ENCODE measurements at regions of chr1 and their contacts with region 1.

Region 1: DNA sequence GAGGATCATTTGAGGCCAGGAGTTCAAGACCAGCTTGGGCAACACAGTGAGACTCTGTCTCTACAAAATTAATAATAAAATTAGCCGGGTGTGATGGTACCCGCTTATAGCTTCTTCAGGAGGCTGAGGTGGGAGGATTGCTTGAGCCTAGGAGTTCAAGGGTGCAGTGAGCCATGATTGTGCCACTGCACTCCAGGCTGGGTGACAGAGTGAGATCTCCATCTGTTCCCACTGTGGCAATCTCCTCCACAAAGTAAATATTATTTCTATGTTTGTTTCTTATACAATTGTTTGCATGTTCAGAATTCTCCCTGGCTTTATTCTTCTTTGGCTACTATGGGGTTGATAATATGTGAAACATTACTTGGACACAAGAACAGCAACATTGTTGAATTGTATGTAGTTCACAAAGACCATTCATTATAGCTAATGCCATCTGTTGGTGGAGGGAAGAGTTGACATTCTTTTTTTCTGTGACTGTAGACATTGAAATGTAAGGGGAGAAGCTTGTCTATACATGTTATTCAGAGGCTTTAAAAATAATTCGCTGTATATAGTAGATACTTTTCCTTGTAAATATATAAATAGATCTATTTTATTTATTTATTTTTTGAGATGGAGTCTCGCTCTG is 47.8 kb upstream of the SRSF10 start:
- DNase-seq: no peak

Region 2: DNA sequence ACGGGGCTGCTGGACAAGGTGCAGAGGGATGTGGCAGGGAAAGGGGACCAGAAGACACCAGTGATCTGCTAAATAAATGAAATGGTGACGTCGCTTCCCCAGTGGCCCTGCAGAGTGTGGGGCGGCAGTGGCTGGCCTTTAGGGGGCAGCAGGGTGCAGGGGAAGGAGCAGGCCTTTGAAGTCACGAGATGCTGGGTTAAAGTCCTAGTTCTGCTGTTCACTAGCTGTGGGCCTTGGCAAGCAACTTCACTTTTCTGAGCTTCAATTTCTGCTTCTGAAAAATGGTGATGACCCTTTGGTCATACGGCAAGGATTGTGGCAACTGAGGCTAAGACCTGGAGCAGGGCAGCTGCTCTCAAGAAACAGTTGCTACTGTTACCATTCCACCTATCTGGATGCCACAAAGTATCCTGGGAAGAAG is 218.2 kb before region 1 on chr1:
- intact Hi-C with region 1: loop called (anchors 5 kb)
- DNase-seq: no peak